CD8-positive, alpha-beta T cell (primary cell): ENCODE measurements at regions of chr3 and their contacts with region 1.

Region 1: DNA sequence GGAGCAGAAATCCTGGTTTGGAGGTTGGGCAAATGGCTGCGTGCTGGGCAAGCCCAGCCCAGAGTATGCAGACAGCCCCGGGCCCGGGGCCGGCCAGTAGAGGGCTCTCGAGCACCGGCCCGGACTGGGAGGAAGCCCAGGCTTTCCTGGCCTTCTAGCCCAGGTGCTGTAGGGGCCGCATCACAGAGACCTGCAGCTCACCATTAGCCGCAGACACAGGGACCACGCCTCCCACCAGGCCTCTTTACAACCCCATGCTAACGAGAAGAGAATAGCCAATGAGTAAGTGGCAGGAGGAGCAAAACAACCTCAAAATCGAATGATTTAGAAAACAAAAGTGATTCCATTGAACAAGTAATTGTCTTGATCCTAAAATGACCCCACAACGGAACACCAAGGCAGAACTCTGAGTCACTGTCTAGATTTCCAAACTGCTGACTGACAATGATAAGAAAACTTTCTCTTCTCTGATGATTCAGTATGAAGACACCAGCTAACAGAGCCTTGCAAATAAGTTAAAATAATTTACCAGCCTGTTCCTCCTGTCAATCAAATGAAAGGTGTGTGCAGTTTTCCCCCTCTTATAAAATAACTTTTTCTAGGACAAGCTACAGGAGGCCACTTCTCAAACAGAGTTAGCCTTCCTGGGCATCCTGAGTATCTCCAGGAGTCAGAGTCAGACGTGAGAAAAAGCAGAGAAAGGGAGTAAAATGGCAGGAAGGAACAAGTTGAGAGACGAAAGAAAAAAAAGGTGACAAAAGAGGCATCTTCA is 102.2 kb downstream of the DGKG start:
- DNase-seq: peak; percentile 42 to 80 (median 54)
- ATAC-seq: peak; percentile 93
- H3K4me3 ChIP-seq: no peak overlapping the region
- H3K4me3 Mint-ChIP-seq: no peak overlapping the region
- H3K27ac ChIP-seq: no peak overlapping the region
- H3K27ac Mint-ChIP-seq: peak overlapping the region; percentile 66
- H3K4me1 ChIP-seq: no peaks in the 10 kb centered on the region
- H3K4me1 Mint-ChIP-seq: peaks cover 16% of the 10 kb centered on the region
- H3K27me3 ChIP-seq: no peaks in the 10 kb centered on the region
- H3K27me3 Mint-ChIP-seq: no peaks in the 10 kb centered on the region
- CTCF ChIP-seq: peak; percentile 59

Region 2: DNA sequence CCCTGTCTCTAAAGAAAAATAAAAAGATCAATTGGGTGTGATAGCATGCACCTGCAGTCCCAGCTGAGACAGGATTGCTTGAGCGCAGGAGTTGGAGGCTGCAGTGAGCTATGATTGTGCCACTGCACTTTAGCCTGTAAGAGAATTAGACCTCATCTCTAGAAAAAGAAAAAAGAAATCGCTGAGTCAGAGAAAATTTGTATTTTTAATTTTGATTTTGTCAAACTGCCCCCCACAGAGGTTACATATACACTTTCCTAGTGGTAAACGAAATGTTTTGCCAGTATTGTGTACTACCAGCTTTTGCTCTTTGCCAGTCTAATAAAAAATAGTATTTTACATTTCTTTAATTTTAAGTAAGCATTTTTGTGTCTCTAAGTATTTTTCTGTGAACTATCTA is 289.7 kb after region 1 on chr3:
- CTCF ChIA-PET with region 1: interaction called, 19 read pairs
- POLR2A ChIA-PET with region 1: no interaction called
- intact Hi-C with region 1: no loop called
- DNase-seq: no peak
- ATAC-seq: no peak
- H3K4me3 ChIP-seq: no peak overlapping the region
- H3K4me3 Mint-ChIP-seq: no peak overlapping the region
- H3K27ac ChIP-seq: no peak overlapping the region
- H3K27ac Mint-ChIP-seq: no peak overlapping the region
- H3K4me1 ChIP-seq: no peaks in the 10 kb centered on the region
- H3K4me1 Mint-ChIP-seq: no peaks in the 10 kb centered on the region
- H3K27me3 ChIP-seq: no peaks in the 10 kb centered on the region
- H3K27me3 Mint-ChIP-seq: no peaks in the 10 kb centered on the region
- CTCF ChIP-seq: no peak

Region 3: DNA sequence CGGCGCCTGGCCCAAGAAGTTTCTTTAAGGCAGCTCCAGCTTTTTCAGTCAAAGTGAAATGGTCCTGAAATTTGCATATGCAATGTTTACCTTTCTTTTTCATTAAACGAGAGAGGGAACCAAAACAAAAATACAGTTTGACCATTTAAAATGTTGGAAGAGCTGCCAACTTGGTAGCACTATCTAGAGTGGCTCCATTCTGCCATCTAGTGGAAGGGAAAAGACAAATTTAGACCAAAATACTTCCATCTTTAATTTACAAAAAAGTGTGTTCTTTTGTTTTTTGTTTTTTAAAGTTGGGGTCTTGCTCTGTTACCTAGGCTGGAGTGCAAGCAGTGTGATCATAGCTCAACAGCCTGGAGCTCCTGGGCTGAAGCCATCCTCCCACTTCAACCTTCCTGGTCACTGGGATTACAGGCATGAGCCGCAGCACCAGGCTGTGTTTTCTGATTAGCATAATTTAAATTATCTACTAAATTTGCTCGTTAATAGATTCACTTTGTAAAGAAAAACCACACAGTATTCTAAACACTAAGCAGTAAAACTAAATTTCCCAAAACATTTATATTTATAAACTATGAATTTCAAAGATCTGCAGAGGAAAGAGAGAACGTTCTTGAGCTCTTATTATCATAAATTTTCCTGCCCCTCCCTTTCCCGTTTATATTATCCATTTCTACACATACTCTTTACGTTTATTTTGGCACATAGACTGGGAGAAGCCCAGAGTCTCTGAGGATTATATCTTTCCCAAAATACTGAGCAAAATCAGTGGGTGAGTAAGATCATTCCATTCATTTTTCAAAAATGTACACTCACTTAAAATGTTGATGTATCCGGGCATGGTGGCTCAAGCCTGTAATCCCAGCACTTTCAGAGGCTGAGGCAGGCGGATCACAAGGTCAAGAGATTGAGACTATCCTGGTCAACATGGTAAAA is 561.9 kb after region 1 on chr3:
- CTCF ChIA-PET with region 1: no interaction called
- POLR2A ChIA-PET with region 1: no interaction called
- intact Hi-C with region 1: loop called in 1 of 2 experiments (anchors 5 kb)
- DNase-seq: peak in 3 of 9 experiments; percentile 31 to 75 (median 68)
- ATAC-seq: peak; percentile 30
- H3K4me3 ChIP-seq: no peak overlapping the region
- H3K4me3 Mint-ChIP-seq: no peak overlapping the region
- H3K27ac ChIP-seq: no peak overlapping the region
- H3K27ac Mint-ChIP-seq: no peak overlapping the region
- H3K4me1 ChIP-seq: peaks cover 12% of the 10 kb centered on the region
- H3K4me1 Mint-ChIP-seq: peaks cover 14% of the 10 kb centered on the region
- H3K27me3 ChIP-seq: peaks cover 4 to 7% of the 10 kb centered on the region in 2 experiments
- H3K27me3 Mint-ChIP-seq: peaks cover 18% of the 10 kb centered on the region
- CTCF ChIP-seq: peak; percentile 76